ENCODE measurements at regions of chr17 and their contacts with region 1.

Region 1: GRCh38 chr17:39235555-39236449 is 10.1 kb upstream of the STAC2 start:
- DNase-seq: peak; percentile 57
- ATAC-seq: peak; percentile 21; the same call in 1 of the 2 replicates
- H3K4me3 ChIP-seq: no peak overlapping the region
- H3K27ac ChIP-seq: no peak overlapping the region
- H3K4me1 ChIP-seq: peaks cover 3% of the 10 kb centered on the region; the same call in 1 of the 2 replicates
- H3K27me3 ChIP-seq: peaks cover 7% of the 10 kb centered on the region
- CTCF ChIP-seq: peak; percentile 88
- POLR2A ChIP-seq: no peak
- RAD21 ChIP-seq: peak; percentile 26

Region 2: GRCh38 chr17:39069114-39069756 is 166.6 kb before region 1 on chr17:
- CTCF ChIA-PET with region 1: no interaction called
- POLR2A ChIA-PET with region 1: no interaction called
- dilution Hi-C with region 1: no loop called
- in situ Hi-C with region 1: no loop called
- intact Hi-C with region 1: loop called (anchors 10 kb)
- DNase-seq: peak; percentile 54
- ATAC-seq: peak; percentile 93
- H3K4me3 ChIP-seq: no peak overlapping the region
- H3K27ac ChIP-seq: no peak overlapping the region
- H3K4me1 ChIP-seq: peaks cover 6% of the 10 kb centered on the region
- H3K27me3 ChIP-seq: peaks cover 29% of the 10 kb centered on the region
- CTCF ChIP-seq: peak; percentile 82
- POLR2A ChIP-seq: no peak
- RAD21 ChIP-seq: peak; percentile 78

Region 3: GRCh38 chr17:39209317-39210092 is 26.3 kb before region 1 on chr17:
- CTCF ChIA-PET with region 1: interaction called, 5 read pairs
- POLR2A ChIA-PET with region 1: no interaction called
- dilution Hi-C with region 1: no loop called
- in situ Hi-C with region 1: no loop called
- intact Hi-C with region 1: loop called (anchors 2 kb)
- DNase-seq: peak; percentile 69
- ATAC-seq: peak; percentile 74
- H3K4me3 ChIP-seq: peak overlapping the region; percentile 31
- H3K27ac ChIP-seq: no peak overlapping the region; the same call in 1 of the 2 replicates
- H3K4me1 ChIP-seq: peaks cover 16% of the 10 kb centered on the region
- H3K27me3 ChIP-seq: peaks cover 2% of the 10 kb centered on the region; the same call in 1 of the 2 replicates
- CTCF ChIP-seq: no peak
- POLR2A ChIP-seq: 0 out of 2 replicates have a peak, but pooled peaks have one; percentile 22
- RAD21 ChIP-seq: no peak

Region 4: GRCh38 chr17:39401412-39402243 is 165.8 kb after region 1 on chr17 and contains the start of gene FBXL20:
- CTCF ChIA-PET with region 1: no interaction called
- POLR2A ChIA-PET with region 1: no interaction called
- dilution Hi-C with region 1: no loop called
- in situ Hi-C with region 1: no loop called
- intact Hi-C with region 1: no loop called
- DNase-seq: peak; percentile 84
- ATAC-seq: peak; percentile 78
- H3K4me3 ChIP-seq: peak within 1 kb of the TSS; percentile 100
- H3K27ac ChIP-seq: peak within 1 kb of the TSS; percentile 87
- H3K4me1 ChIP-seq: peaks cover 7% of the 10 kb centered on the region
- H3K27me3 ChIP-seq: no peaks in the 10 kb centered on the region
- CTCF ChIP-seq: no peak
- POLR2A ChIP-seq: peak; percentile 90
- RAD21 ChIP-seq: no peak
- total RNA-seq, gene FBXL20: 12.2 and 13.8 TPM in 2 replicates

Measured in IMR-90 (cell line).